Activated T-helper 2 cell treated with anti-CD3 and anti-CD28 coated beads, Interferon-gamma antibody, Interleukin-2, Interleukin-4, amounts not matched to agents 10 μg/mL and 5 μg/mL and 100 μg/mL, durations not matched to agents 14 hours and 24 hours and 36 hours (primary cell): ENCODE measurements at regions of chr11 and their contacts with region 1.

Region 1: DNA sequence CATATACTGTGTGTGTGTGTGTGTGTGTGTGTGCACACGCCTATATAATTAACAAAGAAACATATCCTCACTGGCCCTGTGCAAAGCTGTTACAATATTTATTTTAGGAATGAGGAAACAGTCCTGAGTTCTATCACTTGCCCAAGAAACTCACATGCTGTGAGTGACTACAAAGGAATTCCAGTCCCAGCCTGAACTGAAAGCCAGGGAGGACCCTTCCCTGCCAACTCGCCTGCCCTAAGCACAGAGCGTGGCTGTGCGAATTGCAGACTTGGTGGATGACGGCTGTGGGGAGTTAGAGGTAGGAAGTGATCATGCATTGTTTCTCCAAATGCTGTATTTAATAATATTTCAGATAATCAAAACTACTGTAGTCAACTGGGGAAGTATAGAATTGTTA is 26.4 kb upstream of the CD5 start:
- DNase-seq: no peak
- H3K4me3 Mint-ChIP-seq: peak overlapping the region; percentile 62
- H3K27ac Mint-ChIP-seq: peak overlapping the region; percentile 81
- H3K4me1 Mint-ChIP-seq: peaks cover 88% of the 10 kb centered on the region
- H3K27me3 Mint-ChIP-seq: no peaks in the 10 kb centered on the region

Region 2: GRCh38 chr11:60615497-60615896 is 460.4 kb before region 1 on chr11:
- intact Hi-C with region 1: no loop called
- DNase-seq: no peak
- H3K4me3 Mint-ChIP-seq: no peak overlapping the region
- H3K27ac Mint-ChIP-seq: no peak overlapping the region
- H3K4me1 Mint-ChIP-seq: no peaks in the 10 kb centered on the region
- H3K27me3 Mint-ChIP-seq: peaks cover 15% of the 10 kb centered on the region

Region 3: DNA sequence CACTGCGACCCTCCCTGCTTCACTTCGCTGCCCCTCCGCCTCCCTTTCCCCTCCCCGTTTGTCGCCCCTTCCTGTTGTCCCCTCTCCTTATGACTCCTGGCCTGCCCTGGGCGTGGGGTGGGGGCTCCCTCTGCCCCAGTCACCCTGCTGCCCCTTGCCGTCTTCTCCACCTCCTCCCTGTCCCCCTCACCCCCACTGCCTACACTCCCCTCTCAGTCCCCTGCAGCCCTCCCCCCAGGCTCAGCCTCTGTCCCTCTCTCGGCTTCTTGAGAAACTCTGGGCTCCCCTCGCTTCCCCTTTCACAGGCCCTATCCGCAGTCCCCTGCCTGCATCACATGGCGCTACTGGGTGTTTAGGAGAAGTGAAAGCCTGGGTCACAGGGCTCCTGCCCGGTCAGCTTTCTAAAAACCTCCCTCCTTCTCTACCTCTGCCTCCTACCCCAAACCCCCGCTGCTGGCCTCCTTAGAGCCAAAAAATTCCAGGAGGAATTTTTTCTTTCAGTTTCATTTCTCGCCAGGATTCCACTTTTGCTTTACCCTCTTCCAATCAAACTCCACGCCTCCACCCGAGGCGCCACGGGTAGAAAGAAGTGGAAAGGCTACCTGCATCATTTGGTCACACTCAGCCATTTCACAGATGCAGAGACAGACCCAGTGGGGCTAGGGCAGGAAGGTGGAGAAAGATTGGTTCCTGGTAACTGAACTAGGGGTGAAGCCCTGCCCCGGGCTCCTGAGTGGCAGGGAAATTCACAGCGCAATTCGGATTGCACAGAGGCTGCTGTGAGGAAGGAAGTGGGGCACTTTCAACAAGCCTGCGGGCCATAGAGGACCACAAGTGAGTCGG is 123.8 kb before region 1 on chr11 and contains the start of gene SLC15A3:
- intact Hi-C with region 1: no loop called
- DNase-seq: no peak
- H3K4me3 Mint-ChIP-seq: peak within 1 kb of the TSS; percentile 61
- H3K27ac Mint-ChIP-seq: peak within 1 kb of the TSS; percentile 28
- H3K4me1 Mint-ChIP-seq: peaks cover 7% of the 10 kb centered on the region
- H3K27me3 Mint-ChIP-seq: peaks cover 31% of the 10 kb centered on the region
- total RNA-seq, gene SLC15A3: 2.1 and 2.2 TPM in 2 replicates

Region 4: GRCh38 chr11:61041755-61042518 is 34.0 kb before region 1 on chr11:
- intact Hi-C with region 1: loop called (anchors 5 kb)
- DNase-seq: peak; percentile 90
- H3K4me3 Mint-ChIP-seq: peak overlapping the region; percentile 52
- H3K27ac Mint-ChIP-seq: peak overlapping the region; percentile 95
- H3K4me1 Mint-ChIP-seq: peaks cover 60% of the 10 kb centered on the region
- H3K27me3 Mint-ChIP-seq: no peaks in the 10 kb centered on the region